Activated CD4-positive, alpha-beta T cell treated with anti-CD3 and anti-CD28 coated beads for 36 hours (primary cell): ENCODE measurements at regions of chr14 and their contacts with region 1.

Region 1: DNA sequence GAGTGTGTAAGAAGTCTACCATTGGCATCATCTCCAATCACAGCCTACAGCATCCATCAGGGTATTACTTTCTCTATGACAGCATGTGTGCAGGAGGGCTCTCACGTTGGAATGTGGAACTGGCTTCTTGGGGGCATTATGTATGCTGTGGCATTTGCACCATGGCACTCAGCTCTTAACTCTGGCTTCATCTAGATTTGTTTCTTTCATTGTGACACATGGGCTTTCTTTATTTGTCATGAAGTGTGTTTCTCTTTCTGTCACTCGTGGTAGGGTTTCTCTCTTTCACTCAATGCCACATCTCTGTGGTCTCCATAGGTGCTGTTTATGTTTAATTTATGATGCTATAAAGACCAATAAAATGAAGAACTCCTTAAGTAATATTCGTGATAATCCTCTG is 191.2 kb upstream of the GARIN2 start:
- DNase-seq: peak; percentile 37
- ATAC-seq: peak; percentile 98
- H3K4me3 Mint-ChIP-seq: no peak overlapping the region
- H3K27ac Mint-ChIP-seq: no peak overlapping the region
- H3K4me1 Mint-ChIP-seq: peaks cover 11% of the 10 kb centered on the region
- H3K27me3 Mint-ChIP-seq: no peaks in the 10 kb centered on the region

Region 2: GRCh38 chr14:66752109-66752508 is 245.9 kb before region 1 on chr14:
- CTCF ChIA-PET with region 1: interaction called, 3 read pairs
- POLR2A ChIA-PET with region 1: interaction called, 4 read pairs
- intact Hi-C with region 1: loop called in 1 of 2 experiments (anchors 5 kb)
- DNase-seq: no peak
- ATAC-seq: peak; percentile 83
- H3K4me3 Mint-ChIP-seq: no peak overlapping the region
- H3K27ac Mint-ChIP-seq: no peak overlapping the region
- H3K4me1 Mint-ChIP-seq: peaks cover 13% of the 10 kb centered on the region
- H3K27me3 Mint-ChIP-seq: no peaks in the 10 kb centered on the region

Region 3: GRCh38 chr14:66804141-66804540 is 193.9 kb before region 1 on chr14:
- CTCF ChIA-PET with region 1: no interaction called
- POLR2A ChIA-PET with region 1: no interaction called
- intact Hi-C with region 1: no loop called
- DNase-seq: no peak
- ATAC-seq: no peak
- H3K4me3 Mint-ChIP-seq: no peak overlapping the region
- H3K27ac Mint-ChIP-seq: no peak overlapping the region
- H3K4me1 Mint-ChIP-seq: no peaks in the 10 kb centered on the region
- H3K27me3 Mint-ChIP-seq: no peaks in the 10 kb centered on the region

Region 4: GRCh38 chr14:67187210-67187609 is 189.2 kb after region 1 on chr14:
- CTCF ChIA-PET with region 1: no interaction called
- POLR2A ChIA-PET with region 1: no interaction called
- intact Hi-C with region 1: loop called in 1 of 2 experiments (anchors 1 kb)
- DNase-seq: no peak
- ATAC-seq: no peak
- H3K4me3 Mint-ChIP-seq: no peak overlapping the region
- H3K27ac Mint-ChIP-seq: no peak overlapping the region
- H3K4me1 Mint-ChIP-seq: peaks cover 20% of the 10 kb centered on the region
- H3K27me3 Mint-ChIP-seq: no peaks in the 10 kb centered on the region

Region 5: GRCh38 chr14:67999693-68000384 is 1001.8 kb after region 1 on chr14:
- CTCF ChIA-PET with region 1: no interaction called
- POLR2A ChIA-PET with region 1: no interaction called
- intact Hi-C with region 1: no loop called
- DNase-seq: no peak
- ATAC-seq: no peak
- H3K4me3 Mint-ChIP-seq: no peak overlapping the region
- H3K27ac Mint-ChIP-seq: no peak overlapping the region
- H3K4me1 Mint-ChIP-seq: no peaks in the 10 kb centered on the region
- H3K27me3 Mint-ChIP-seq: no peaks in the 10 kb centered on the region